ENCODE measurements at regions of chr5 and their contacts with region 1.

Region 1: DNA sequence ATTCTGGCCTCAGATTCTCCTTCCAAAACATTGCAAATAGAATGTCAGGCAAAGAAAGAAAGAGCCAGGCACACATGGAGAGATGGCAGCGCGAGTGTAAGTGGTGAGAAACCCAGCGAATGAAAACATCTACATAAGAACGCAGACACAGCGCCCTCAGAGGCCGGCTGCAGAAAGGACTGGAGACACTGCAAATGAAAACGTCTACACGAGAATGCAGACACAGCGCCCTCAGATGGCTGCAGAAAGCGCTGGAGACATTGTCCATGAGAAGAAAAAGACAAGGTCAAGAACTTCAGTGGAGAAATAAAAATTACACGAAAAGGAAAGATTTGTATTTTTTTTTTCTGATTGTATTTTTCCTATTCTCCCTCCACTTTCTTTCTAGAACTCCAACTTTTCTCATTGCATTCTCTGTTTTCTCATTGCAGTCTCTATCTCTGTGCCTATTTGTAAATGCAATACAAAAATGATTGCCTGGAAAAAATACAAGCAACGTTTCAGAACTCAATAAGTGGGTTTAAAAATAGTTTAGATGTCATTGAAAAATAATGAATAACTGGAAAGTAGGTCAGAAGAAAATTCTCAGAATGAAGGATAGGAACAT is 117.9 kb upstream of the LPCAT1 start:
- DNase-seq: peak; percentile 72 to 89 (median 77)
- ATAC-seq: peak; percentile 55 to 73 (median 60)
- H3K4me3 ChIP-seq: no peak overlapping the region
- H3K27ac ChIP-seq: no peak overlapping the region
- H3K4me1 ChIP-seq: peaks cover 0 to 11% (median 5%) of the 10 kb centered on the region in 12 donors
- H3K27me3 ChIP-seq: peaks cover 12 to 35% (median 21%) of the 10 kb centered on the region in 9 donors
- CTCF ChIP-seq: peak; percentile 56 to 95 (median 74)
- POLR2A ChIP-seq: no peak

Region 2: DNA sequence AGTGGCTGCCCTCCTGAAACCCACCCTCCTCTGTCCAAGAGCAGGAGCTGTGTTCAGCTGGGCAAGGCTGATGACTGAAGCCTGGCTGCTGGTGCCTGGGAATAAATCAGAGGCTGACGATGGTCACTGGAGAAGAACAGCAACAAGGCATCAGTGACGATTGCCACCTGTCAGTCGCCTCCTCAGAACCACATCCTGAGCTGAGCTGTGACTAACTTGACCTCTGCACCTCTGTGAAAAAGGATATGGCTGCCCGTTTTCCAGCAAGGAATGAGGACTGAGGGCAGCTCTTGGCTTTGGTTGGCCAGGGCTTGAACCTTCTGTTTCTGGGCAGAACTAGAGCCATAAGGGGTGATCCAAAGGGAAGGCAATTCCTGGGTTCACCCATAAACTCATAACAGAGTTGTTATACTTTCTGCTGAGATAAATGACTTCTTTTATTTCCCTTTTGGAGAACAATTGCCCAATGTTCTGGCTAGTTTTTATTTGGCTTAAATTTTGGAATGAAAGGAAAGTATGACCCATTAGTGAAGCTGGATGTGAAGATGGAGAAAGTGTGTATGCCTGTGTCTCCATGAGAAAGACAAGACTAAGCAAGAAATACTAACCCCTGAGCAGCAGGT is 708.9 kb before region 1 on chr5:
- intact Hi-C with region 1: loop called in 4 of 10 experiments (anchors 10 kb)
- DNase-seq: no peak
- ATAC-seq: peak in 3 of 4 donors; percentile 52 to 71 (median 58)
- H3K4me3 ChIP-seq: no peak overlapping the region
- H3K27ac ChIP-seq: peak overlapping the region in 6 of 12 donors; percentile 9 to 61 (median 32)
- H3K4me1 ChIP-seq: no peaks in the 10 kb centered on the region
- H3K27me3 ChIP-seq: peaks cover 0 to 3% (median 0%) of the 10 kb centered on the region in 9 donors
- CTCF ChIP-seq: no peak
- POLR2A ChIP-seq: no peak

Region 3: DNA sequence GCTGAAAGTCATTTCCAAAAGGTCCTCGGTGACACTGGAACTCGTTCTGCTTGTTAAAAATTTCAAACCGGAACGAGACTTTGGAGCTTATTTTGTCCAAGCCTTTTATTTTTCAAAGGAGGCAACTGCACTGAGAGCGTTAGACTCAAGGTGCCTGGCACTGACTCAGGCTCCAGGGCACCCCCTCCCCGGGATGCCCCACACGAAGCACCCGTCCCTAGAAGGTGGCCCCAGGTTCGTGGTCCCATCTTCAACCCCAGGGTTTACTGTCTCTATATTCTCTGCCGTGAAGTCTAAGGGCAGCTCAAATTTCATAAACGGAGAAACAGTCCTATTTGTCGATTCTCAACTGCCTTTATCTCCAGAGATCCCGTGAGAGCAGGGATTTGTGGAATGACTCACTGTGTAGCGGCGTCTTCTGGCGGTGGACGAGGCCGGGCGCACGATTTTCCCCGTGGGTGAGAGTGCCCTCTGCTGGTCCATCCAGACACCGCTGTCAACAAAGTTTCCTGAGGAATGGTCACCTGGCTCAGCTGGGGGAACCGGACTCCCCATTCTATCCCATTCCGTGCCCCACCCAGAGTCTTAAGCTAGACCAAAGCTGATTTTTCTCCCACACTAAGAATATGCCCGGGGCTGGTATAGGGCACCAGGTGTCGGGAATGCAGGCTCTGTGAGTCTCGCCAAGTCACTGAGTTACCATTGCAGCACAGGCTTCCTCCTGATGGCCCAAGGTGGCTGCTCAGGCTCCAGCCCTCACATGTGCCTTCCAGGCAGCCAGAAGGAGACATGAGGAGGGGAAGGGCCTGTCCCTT is 467.3 kb before region 1 on chr5:
- intact Hi-C with region 1: loop called in 6 of 10 experiments (anchors 2 to 10 kb)
- DNase-seq: peak; percentile 53 to 77 (median 66)
- ATAC-seq: peak; percentile 55 to 76 (median 64)
- H3K4me3 ChIP-seq: no peak overlapping the region
- H3K27ac ChIP-seq: no peak overlapping the region
- H3K4me1 ChIP-seq: peaks cover 0 to 5% (median 0%) of the 10 kb centered on the region in 12 donors
- H3K27me3 ChIP-seq: no peaks in the 10 kb centered on the region
- CTCF ChIP-seq: peak; percentile 63 to 85 (median 74)
- POLR2A ChIP-seq: no peak

Region 4: GRCh38 chr5:1344975-1345838 is 296.5 kb before region 1 on chr5 and contains the start of gene CLPTM1L:
- intact Hi-C with region 1: loop called in 2 of 10 experiments (anchors 10 kb)
- DNase-seq: peak; percentile 86 to 93 (median 89)
- ATAC-seq: peak; percentile 83 to 98 (median 96)
- H3K4me3 ChIP-seq: peak within 1 kb of the TSS; percentile 78 to 100 (median 94)
- H3K27ac ChIP-seq: peak within 1 kb of the TSS; percentile 54 to 94 (median 91)
- H3K4me1 ChIP-seq: peaks cover 0 to 25% (median 20%) of the 10 kb centered on the region in 12 donors
- H3K27me3 ChIP-seq: no peaks in the 10 kb centered on the region
- CTCF ChIP-seq: no peak
- POLR2A ChIP-seq: peak; percentile 50 to 88
- total RNA-seq, gene CLPTM1L: 31.0 to 60.2 (median 39.4) TPM

Region 5: DNA sequence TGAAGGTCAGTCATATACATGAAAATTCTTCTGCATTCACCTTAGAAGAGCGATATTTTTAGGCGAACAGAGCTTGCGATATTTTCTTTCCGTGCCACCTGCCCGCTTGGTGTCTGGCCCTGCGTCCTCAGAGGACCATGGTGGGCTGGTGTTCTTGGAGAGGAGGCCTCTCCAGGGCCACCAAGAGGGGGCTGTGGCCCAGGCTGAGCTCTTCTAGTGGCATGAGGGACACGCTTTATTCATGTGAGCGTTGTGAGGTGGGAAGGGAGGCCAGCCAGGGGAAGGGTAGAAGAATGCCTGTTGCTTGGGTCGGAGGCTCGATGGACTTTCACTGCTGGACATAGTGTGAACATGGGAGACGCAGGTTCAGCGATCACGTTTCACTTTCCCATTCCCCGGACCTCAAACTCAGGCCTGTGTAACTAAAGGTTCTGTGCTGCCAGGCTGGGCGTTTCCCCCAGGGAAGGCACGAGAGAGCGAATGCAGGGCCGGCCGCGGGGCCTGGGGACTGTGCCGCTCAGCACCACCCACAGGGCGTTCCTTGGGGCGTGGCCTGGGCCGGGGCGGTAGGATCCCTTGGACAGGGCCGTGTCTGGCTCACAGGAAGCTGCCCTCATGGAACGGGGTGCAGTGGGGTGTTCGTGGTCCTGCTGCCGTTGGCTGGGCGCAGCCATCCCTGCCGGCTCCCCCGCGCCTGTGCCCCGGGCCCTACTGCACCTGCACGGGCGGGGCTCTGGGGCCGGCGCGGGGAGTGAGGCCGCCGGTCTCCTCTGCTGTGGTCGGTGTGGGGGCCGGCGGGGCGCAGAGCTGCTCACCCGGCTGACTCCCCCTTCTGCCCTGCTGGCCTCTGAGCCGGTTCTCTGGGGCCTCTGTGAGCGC is 256.0 kb before region 1 on chr5:
- intact Hi-C with region 1: loop called in 8 of 10 experiments (anchors 2 to 10 kb)
- DNase-seq: peak; percentile 81 to 94 (median 85)
- ATAC-seq: peak; percentile 75 to 96 (median 93)
- H3K4me3 ChIP-seq: peak overlapping the region; percentile 12 to 73 (median 63)
- H3K27ac ChIP-seq: peak overlapping the region in 8 of 12 donors; percentile 10 to 90 (median 46)
- H3K4me1 ChIP-seq: peaks cover 0 to 15% (median 5%) of the 10 kb centered on the region in 12 donors
- H3K27me3 ChIP-seq: peaks cover 0 to 30% (median 2%) of the 10 kb centered on the region in 9 donors
- CTCF ChIP-seq: no peak
- POLR2A ChIP-seq: peak in 1 of 2 donors; percentile 26

Measured in heart left ventricle (tissue), 16 donors.